IMR-90 (cell line): ENCODE measurements at regions of chr9 and their contacts with region 1.

Region 1: DNA sequence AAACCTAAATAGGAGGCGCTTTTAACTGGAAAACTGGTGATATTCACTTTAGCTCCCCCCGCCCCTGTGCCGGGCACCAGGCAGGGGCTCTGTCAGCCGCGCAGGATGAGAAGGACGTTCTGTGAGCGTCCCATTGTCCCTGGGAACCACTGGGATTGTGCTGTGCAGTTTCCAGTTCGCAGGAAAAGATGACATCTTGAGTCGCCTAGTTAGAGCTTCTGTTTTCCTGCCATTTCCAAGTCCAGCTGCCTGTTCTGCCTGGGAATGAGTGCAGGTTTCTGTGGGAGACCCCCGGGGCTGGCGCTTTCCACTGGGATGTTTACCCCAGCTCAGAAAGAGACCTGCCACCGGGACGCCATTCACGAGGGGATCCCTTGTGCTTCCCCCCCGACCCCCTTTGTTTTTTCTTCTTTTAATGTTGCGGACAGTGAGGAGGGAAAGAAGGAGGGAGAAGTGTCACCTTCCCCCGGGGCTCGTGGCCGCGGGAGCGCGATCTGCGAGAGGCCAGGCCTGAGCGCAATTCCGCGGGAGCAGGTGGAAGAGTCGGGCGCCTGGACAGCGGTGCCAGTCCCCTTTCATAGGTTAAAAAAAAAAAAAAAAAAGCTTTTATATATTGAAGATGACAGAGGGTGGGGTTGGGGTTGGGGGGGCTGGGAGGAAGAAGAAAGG is 121.5 kb downstream of the RMI1 start:
- DNase-seq: no peak
- ATAC-seq: no peak
- H3K4me3 ChIP-seq: no peak overlapping the region
- H3K27ac ChIP-seq: no peak overlapping the region
- H3K4me1 ChIP-seq: no peaks in the 10 kb centered on the region
- H3K27me3 ChIP-seq: peaks cover 28% of the 10 kb centered on the region
- CTCF ChIP-seq: no peak
- POLR2A ChIP-seq: no peak
- RAD21 ChIP-seq: no peak

Region 2: GRCh38 chr9:84002344-84002743 is 99.8 kb before region 1 on chr9:
- CTCF ChIA-PET with region 1: no interaction called
- POLR2A ChIA-PET with region 1: interaction called, 11 read pairs
- dilution Hi-C with region 1: no loop called
- in situ Hi-C with region 1: no loop called
- intact Hi-C with region 1: no loop called
- DNase-seq: peak; percentile 17
- ATAC-seq: peak; percentile 61; the same call in 1 of the 2 replicates
- H3K4me3 ChIP-seq: no peak overlapping the region
- H3K27ac ChIP-seq: no peak overlapping the region; the same call in 1 of the 2 replicates
- H3K4me1 ChIP-seq: peaks cover 2% of the 10 kb centered on the region; the same call in 1 of the 2 replicates
- H3K27me3 ChIP-seq: no peaks in the 10 kb centered on the region
- CTCF ChIP-seq: no peak
- POLR2A ChIP-seq: no peak
- RAD21 ChIP-seq: no peak

Region 3: DNA sequence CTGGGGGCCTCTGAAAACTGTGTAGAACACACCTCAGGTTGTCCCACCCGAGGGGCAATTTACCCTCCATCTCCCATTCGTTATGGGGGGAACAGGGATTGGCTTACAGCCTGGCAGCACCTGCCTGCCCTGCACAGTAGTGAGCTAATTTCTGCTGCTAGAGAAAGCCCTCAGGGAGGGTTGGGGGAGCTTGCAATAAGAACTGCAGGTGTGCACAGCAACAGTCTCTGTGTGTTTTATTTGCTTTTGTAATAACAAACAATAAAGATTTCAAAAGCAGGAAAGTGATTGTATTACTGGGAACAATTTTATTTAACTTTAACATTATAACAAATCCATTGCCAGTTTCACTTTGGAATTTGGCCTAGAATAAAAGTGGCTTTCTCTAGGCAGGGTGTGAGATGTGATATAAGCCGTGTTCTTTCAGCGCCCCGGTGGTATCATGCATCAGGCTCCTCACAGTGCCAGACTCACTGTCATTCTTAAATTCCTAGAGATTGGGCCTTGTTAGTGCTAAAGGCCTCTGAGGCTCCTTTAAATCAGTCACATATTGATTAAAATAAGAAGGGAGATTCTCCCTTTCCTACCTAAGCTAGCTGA is 40.4 kb before region 1 on chr9:
- CTCF ChIA-PET with region 1: no interaction called
- POLR2A ChIA-PET with region 1: no interaction called
- dilution Hi-C with region 1: no loop called
- in situ Hi-C with region 1: no loop called
- intact Hi-C with region 1: no loop called
- DNase-seq: no peak
- ATAC-seq: no peak
- H3K4me3 ChIP-seq: no peak overlapping the region
- H3K27ac ChIP-seq: no peak overlapping the region
- H3K4me1 ChIP-seq: no peaks in the 10 kb centered on the region
- H3K27me3 ChIP-seq: no peaks in the 10 kb centered on the region; the same call in none of the 2 replicates
- CTCF ChIP-seq: no peak
- POLR2A ChIP-seq: no peak
- RAD21 ChIP-seq: no peak

Region 4: GRCh38 chr9:84154320-84154719 is 52.2 kb after region 1 on chr9:
- CTCF ChIA-PET with region 1: no interaction called
- POLR2A ChIA-PET with region 1: no interaction called
- dilution Hi-C with region 1: no loop called
- in situ Hi-C with region 1: no loop called
- intact Hi-C with region 1: loop called (anchors 10 kb)
- DNase-seq: peak; percentile 61
- ATAC-seq: peak; percentile 91
- H3K4me3 ChIP-seq: no peak overlapping the region
- H3K27ac ChIP-seq: no peak overlapping the region
- H3K4me1 ChIP-seq: peaks cover 8% of the 10 kb centered on the region
- H3K27me3 ChIP-seq: no peaks in the 10 kb centered on the region
- CTCF ChIP-seq: no peak
- POLR2A ChIP-seq: no peak
- RAD21 ChIP-seq: no peak

Region 5: DNA sequence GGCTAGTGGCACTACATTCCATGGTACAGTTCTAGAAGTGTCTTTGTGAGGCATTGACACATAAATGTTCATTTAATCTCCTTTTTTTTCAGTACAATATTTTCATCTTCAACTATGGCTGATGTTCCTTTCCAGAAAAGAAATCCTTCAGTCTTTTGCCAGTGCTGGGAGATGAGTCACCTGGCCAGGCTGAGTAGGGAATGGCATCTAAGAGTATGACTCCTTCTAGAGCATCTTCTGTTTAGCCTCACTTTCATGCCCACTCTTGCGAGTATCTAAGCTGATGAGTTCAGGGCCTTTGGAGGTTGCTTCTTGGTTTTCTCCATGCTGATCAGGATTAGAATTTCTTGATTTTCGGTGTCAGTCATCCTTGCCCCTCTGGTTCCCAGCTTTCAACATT is 114.1 kb after region 1 on chr9:
- CTCF ChIA-PET with region 1: no interaction called
- POLR2A ChIA-PET with region 1: no interaction called
- dilution Hi-C with region 1: no loop called
- in situ Hi-C with region 1: no loop called
- intact Hi-C with region 1: no loop called
- DNase-seq: peak; percentile 16
- ATAC-seq: no peak
- H3K4me3 ChIP-seq: no peak overlapping the region
- H3K27ac ChIP-seq: no peak overlapping the region
- H3K4me1 ChIP-seq: no peaks in the 10 kb centered on the region
- H3K27me3 ChIP-seq: peaks cover 2% of the 10 kb centered on the region
- CTCF ChIP-seq: no peak
- POLR2A ChIP-seq: no peak
- RAD21 ChIP-seq: no peak